Kidney (tissue), 22 donors: ENCODE measurements at regions of chr1 and their contacts with region 1.

Region 1: DNA sequence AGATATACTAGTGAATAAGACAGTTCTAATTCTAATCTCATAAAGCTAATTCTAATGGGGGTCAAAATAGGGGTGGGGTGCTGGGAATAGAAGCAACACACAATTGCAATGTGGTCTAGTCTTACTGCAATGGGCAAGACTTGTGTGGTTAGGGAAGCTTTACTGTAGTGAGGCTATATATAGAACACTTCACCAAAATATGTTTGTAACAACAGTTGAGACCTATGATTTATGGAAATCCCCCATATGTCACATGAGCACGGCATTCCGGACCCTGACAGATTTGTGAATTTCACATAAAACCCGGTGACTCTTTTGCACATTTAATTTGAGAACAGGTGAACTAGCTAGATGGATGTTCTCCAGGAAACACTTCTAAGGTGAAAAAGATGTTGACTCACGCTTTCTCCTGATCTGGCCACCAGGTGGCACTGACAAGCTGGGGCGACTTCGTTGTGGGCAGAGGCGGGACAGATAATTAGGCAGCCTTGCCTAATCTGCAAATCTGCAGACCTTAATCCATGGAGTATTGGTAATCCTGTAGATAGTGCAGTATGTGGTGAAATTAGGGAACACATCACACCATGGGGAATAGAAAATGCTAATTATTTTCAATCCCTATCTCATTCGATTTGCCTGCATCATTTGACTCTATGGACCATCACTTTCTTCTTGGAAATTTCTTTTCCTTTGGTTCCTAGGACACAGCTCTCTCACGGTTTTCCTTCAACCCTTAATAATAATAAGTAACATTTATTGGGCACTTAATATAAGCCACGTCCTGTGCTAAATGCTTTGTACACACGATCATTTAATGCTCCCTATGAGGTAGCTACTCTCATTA is 37.7 kb downstream of the KIAA0040 start:
- DNase-seq: peak; percentile 62 to 80 (median 70)
- H3K4me3 ChIP-seq: no peak overlapping the region
- H3K27ac ChIP-seq: no peak overlapping the region
- H3K4me1 ChIP-seq: no peaks in the 10 kb centered on the region
- H3K27me3 ChIP-seq: no peaks in the 10 kb centered on the region
- CTCF ChIP-seq: peak; percentile 92

Region 2: DNA sequence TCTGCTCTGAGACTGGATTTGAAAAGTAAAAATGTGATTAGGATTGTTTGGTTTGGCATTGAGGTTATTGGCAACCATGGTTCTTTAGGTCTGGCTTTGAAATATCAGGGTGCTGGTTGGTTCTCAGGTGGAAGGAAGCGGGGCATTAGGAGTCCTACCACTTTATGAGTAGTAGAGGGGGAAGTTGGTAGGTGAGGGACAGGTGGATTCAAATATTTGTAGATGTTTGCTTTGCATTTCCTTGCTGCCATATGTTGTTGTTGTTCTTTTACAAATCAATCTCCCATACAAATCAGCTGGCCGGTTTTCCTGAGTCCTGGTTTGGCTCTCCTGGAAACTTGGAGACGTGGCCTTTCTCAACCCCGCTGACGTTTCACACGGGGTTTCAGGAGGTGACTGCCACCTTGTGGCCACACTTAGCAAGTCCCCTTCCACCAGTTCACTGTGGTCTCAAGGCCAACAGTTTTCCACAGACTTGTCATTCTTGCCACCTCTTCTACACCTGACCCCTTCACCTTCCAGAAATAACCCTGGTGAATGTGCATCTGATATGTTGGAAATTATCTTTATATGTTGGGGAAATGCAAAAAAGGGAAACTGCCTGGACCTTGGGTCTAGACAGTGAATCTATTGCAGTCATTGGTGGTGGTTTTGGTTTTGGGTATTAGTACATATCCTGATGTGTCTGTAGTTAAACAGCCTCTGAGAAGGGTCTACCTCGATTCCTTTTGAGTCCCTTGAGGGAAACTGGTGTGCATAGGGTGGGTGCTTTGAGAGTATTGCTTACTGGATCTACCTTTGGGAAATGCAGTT is 164.8 kb after region 1 on chr1:
- intact Hi-C with region 1: loop called (anchors 5 kb)
- DNase-seq: peak; percentile 74 to 87 (median 79)
- H3K4me3 ChIP-seq: no peak overlapping the region
- H3K27ac ChIP-seq: no peak overlapping the region
- H3K4me1 ChIP-seq: peaks cover 0 to 3% (median 0%) of the 10 kb centered on the region in 3 donors
- H3K27me3 ChIP-seq: no peaks in the 10 kb centered on the region
- CTCF ChIP-seq: peak; percentile 92